Psoas muscle (tissue), 8 donors: ENCODE measurements at regions of chr3 and their contacts with region 1.

Region 1: GRCh38 chr3:147418808-147419701 is 9.9 kb downstream of the ZIC1 start:
- DNase-seq: peak; percentile 84 to 93
- ATAC-seq: peak; percentile 87 to 93 (median 92)
- H3K4me3 ChIP-seq: peak overlapping the region; percentile 75
- H3K27ac ChIP-seq: peak overlapping the region; percentile 70
- H3K4me1 ChIP-seq: peaks cover 5% of the 10 kb centered on the region
- H3K27me3 ChIP-seq: peaks cover 0 to 49% (median 11%) of the 10 kb centered on the region in 3 donors
- CTCF ChIP-seq: no peak

Region 2: DNA sequence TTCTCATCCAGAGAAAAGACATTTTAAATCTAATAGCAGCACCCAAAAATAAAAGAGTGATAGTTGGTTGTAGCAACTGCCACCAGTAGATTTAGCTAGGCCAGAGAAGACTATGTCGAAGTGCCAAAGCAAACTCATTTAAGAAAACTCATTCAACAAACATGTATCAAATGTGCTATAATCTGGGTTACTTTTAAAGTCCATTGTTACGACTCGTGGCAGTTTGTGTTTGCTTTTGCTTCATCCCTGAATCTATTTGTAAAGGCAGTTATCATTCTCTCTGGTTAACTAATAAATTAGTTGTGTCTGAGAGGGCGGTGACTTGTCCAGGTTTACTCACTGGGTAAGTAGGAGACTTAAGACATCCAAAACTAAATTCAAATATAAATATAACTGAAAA is 172.1 kb before region 1 on chr3:
- intact Hi-C with region 1: no loop called
- DNase-seq: no peak
- ATAC-seq: no peak
- H3K4me3 ChIP-seq: no peak overlapping the region
- H3K27ac ChIP-seq: no peak overlapping the region
- H3K4me1 ChIP-seq: no peaks in the 10 kb centered on the region
- H3K27me3 ChIP-seq: no peaks in the 10 kb centered on the region
- CTCF ChIP-seq: no peak

Region 3: GRCh38 chr3:147361454-147362420 is 57.3 kb before region 1 on chr3:
- intact Hi-C with region 1: loop called in 1 of 2 experiments (anchors 10 kb)
- DNase-seq: peak; percentile 34 to 70
- ATAC-seq: peak in 2 of 4 donors; percentile 49 to 73
- H3K4me3 ChIP-seq: no peak overlapping the region
- H3K27ac ChIP-seq: no peak overlapping the region
- H3K4me1 ChIP-seq: no peaks in the 10 kb centered on the region
- H3K27me3 ChIP-seq: peaks cover 11 to 67% (median 28%) of the 10 kb centered on the region in 3 donors
- CTCF ChIP-seq: peak; percentile 61